Naive thymus-derived CD4-positive, alpha-beta T cell (primary cell): ENCODE measurements at regions of chr22 and their contacts with region 1.

Region 1: DNA sequence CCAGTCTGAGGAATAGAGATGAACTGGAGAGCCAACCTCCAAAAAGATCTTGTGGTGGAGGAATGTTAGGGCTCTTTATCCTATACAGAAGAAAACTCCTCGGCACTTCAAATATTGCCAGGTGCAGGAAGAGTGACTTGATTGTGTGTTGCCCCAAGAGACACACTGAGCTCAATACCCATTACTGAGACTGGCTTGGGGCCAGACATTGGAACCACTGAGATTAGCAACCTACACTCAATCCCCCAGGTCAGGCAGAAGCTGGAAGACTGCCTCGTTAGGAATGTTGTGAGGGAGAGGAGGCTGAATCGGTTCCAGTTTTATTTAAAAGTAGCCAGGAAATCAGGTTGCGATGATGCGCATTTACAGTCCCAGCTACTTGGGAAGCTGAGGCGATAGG is 2.4 kb upstream of the SGSM3 start:
- DNase-seq: no peak
- ATAC-seq: no peak
- H3K4me3 ChIP-seq: no peak overlapping the region
- H3K4me3 Mint-ChIP-seq: peak overlapping the region in 2 of 10 donors; percentile 17 to 33
- H3K27ac ChIP-seq: no peak overlapping the region
- H3K27ac Mint-ChIP-seq: peak overlapping the region in 1 of 9 donors; percentile 41
- H3K4me1 ChIP-seq: peaks cover 3 to 13% of the 10 kb centered on the region in 2 donors
- H3K4me1 Mint-ChIP-seq: peaks cover 12 to 23% (median 17%) of the 10 kb centered on the region in 7 donors
- H3K27me3 ChIP-seq: no peaks in the 10 kb centered on the region
- H3K27me3 Mint-ChIP-seq: no peaks in the 10 kb centered on the region

Region 2: DNA sequence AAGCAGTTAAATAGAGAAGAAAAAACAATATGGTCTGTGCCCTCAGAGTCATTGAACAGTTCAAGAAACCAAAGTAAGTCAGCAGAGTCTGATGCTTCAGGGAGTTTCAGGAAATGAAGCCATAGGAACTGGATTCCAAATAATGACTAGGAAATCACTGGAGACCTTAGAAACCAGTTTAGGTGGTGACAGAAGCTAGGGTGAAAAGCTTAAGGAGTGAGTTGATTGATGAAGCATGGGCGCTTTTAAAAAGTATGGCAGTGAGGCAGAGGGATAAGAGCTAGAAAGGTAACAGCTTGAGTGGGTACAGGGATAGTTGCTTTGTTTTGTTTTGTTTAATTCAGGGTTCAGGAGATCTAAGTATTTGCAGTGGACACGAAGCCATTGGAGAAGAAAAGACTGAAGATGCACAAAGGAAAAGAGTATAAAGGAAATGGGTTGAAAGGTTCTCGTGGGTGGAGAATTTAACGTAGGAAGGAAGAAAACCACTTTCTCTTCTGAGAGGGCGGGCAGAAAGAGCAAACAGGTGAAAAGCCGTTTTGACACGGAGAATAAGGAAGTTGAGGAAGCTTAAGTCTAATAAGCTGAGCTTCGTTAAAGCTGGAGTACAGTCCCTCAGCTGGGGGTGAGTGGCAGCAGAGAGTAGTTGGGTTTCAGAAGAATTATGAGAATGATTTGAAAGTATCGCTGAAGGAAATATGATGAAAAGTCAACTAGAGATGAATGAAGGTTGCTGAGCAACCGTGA is 17.2 kb after region 1 on chr22:
- CTCF ChIA-PET with region 1: interaction called, 3 read pairs
- POLR2A ChIA-PET with region 1: interaction called, 3 read pairs
- intact Hi-C with region 1: loop called (anchors 1 to 2 kb)
- DNase-seq: peak in 7 of 9 donors; percentile 51 to 78 (median 73)
- ATAC-seq: peak; percentile 96
- H3K4me3 ChIP-seq: peak overlapping the region; percentile 62
- H3K4me3 Mint-ChIP-seq: peak overlapping the region; percentile 76 to 90 (median 86)
- H3K27ac ChIP-seq: peak overlapping the region; percentile 78
- H3K27ac Mint-ChIP-seq: peak overlapping the region; percentile 90 to 99 (median 97)
- H3K4me1 ChIP-seq: peaks cover 10 to 61% of the 10 kb centered on the region in 2 donors
- H3K4me1 Mint-ChIP-seq: peaks cover 37 to 79% (median 71%) of the 10 kb centered on the region in 7 donors
- H3K27me3 ChIP-seq: no peaks in the 10 kb centered on the region
- H3K27me3 Mint-ChIP-seq: no peaks in the 10 kb centered on the region

Region 3: DNA sequence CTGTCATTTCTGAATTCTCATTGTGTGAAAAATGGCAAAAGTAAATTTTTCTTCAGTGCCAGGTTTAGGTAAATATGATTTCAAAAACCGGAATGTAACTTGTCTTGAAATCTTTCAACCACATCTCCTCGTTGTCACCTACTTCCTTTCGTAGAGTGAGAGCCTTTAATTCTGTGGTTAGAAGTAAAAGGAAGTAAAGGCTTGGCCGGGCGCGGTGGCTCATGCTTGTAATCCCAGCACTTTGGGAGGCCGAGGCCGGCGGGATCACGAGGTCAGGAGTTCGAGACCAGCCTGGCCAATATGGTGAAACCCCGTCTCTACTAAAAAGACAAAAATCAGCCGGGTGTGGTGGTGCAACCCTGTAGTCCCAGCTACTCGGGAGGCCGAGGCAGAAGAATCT is 32.1 kb after region 1 on chr22:
- CTCF ChIA-PET with region 1: no interaction called
- POLR2A ChIA-PET with region 1: interaction called, 13 read pairs
- intact Hi-C with region 1: loop called in 1 of 2 experiments (anchors 1 kb)
- DNase-seq: peak in 8 of 9 donors; percentile 36 to 75 (median 62)
- ATAC-seq: peak; percentile 68
- H3K4me3 ChIP-seq: no peak overlapping the region
- H3K4me3 Mint-ChIP-seq: peak overlapping the region; percentile 72 to 84 (median 81)
- H3K27ac ChIP-seq: peak overlapping the region; percentile 57
- H3K27ac Mint-ChIP-seq: peak overlapping the region; percentile 86 to 96 (median 94)
- H3K4me1 ChIP-seq: peaks cover 51 to 65% of the 10 kb centered on the region in 2 donors
- H3K4me1 Mint-ChIP-seq: peaks cover 60 to 92% (median 82%) of the 10 kb centered on the region in 7 donors
- H3K27me3 ChIP-seq: no peaks in the 10 kb centered on the region
- H3K27me3 Mint-ChIP-seq: no peaks in the 10 kb centered on the region

Region 4: DNA sequence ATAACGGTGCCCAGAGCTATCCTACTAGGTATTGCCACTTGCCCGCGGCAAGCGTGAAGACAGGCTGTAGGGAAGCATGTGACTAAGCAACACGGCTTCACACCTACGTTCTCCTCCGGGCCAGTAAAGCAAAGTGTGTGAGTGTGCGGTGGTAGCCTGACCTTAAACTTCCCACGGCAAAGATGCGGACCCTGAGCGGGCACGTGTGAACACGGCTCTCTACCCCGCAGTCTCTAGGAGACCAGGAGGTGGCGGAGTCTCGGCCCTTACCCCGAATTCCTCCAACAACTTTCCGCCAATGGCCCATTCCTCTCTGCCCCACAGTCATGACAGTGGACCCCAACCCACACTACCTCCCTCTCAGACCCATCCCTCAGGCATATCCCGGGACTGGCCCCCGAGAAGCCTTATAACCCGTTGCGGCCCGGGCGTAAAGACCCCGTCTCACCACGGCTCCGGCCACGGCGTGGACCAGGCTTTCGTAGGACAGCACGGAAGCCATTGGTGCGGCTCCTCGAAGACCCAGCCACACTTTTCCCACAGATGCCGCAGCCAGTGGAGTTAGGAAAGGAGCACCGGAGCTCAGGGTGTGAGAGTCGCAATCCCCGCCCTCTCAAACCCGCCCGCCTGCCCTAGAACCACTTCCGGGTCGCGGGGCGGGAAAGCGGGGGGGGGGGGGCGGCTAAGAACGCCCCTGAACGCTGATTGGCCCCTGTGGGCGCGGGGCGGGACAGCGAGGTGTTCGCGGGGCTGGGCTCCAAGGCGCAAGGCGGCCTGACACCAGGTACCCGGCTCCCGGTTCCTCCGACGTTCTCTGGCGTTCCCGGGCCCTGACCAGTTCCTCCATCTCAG is 451.0 kb after region 1 on chr22 and contains the start of gene SLC25A17:
- CTCF ChIA-PET with region 1: no interaction called
- POLR2A ChIA-PET with region 1: no interaction called
- intact Hi-C with region 1: loop called in 1 of 2 experiments (anchors 2 kb)
- DNase-seq: peak; percentile 71 to 88 (median 82)
- ATAC-seq: peak; percentile 95
- H3K4me3 ChIP-seq: peak within 1 kb of the TSS; percentile 100
- H3K4me3 Mint-ChIP-seq: peak within 1 kb of the TSS; percentile 79 to 99 (median 93)
- H3K27ac ChIP-seq: peak within 1 kb of the TSS; percentile 86
- H3K27ac Mint-ChIP-seq: peak within 1 kb of the TSS; percentile 57 to 96 (median 88)
- H3K4me1 ChIP-seq: peaks cover 9 to 26% of the 10 kb centered on the region in 2 donors
- H3K4me1 Mint-ChIP-seq: peaks cover 22 to 42% (median 37%) of the 10 kb centered on the region in 7 donors
- H3K27me3 ChIP-seq: no peaks in the 10 kb centered on the region
- H3K27me3 Mint-ChIP-seq: no peaks in the 10 kb centered on the region
- total RNA-seq, gene SLC25A17: 6.8 to 22.1 (median 13.1) TPM